ENCODE measurements at regions of chr22 and their contacts with region 1.

Region 1: DNA sequence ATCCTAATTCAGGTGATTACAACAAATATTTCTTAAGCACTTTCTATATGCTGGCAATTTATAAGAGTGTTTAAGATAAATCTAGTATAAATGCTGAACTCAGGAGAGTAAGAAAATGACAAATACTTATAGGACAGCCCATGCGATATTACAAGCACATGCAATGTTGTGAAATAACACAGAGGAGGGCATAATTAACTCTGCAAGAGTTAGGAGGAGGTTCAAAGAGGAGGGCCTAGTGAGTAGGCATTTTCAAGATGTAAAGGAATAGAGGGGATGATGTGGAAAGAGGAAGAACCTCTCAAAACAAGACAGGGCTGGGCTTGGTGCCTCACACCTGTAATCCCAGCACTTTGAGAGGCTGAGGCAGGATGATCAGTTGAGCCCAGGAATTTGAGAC is 37.1 kb upstream of the IL17RA start:
- DNase-seq: no peak
- CTCF ChIP-seq: no peak

Region 2: GRCh38 chr22:16922076-16922475 is 125.6 kb before region 1 on chr22:
- in situ Hi-C with region 1: loop called (anchors 10 kb)
- DNase-seq: no peak
- CTCF ChIP-seq: no peak